ENCODE measurements at regions of chr7 and their contacts with region 1.

Region 1: DNA sequence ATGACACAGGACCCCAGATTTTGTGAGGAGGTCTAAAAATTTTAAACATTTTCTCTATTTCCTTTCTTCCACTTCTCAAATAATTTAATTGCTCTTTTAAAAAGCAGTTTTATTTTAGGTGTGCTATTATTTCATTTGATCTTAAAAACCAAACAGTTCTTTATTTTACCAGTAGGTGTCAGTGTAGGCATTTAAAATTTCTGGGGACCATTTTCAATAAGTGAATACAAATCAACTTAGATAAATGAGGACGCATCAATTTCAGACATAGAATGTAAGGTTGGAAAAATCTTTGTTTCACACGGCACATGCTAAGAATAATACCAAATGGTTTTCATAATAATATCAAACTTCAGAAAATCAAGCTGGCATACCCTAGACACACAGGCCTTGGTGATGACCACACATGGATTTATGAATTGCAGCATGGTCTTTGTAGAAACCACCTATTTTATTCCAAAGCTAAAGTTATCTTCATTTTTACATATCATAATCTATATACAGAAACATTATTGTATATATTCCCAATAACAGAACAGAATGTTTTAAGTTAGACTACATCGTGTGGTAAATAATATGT is 127.6 kb upstream of the SLC26A5 start:
- DNase-seq: no peak
- H3K4me3 Mint-ChIP-seq: no peak overlapping the region
- H3K27ac Mint-ChIP-seq: no peak overlapping the region
- H3K4me1 Mint-ChIP-seq: no peaks in the 10 kb centered on the region
- H3K27me3 Mint-ChIP-seq: peaks cover 8% of the 10 kb centered on the region

Region 2: GRCh38 chr7:104914421-104914820 is 1340.9 kb after region 1 on chr7:
- intact Hi-C with region 1: loop called (anchors 10 kb)
- DNase-seq: no peak
- H3K4me3 Mint-ChIP-seq: no peak overlapping the region
- H3K27ac Mint-ChIP-seq: no peak overlapping the region
- H3K4me1 Mint-ChIP-seq: peaks cover 2% of the 10 kb centered on the region
- H3K27me3 Mint-ChIP-seq: peaks cover 21% of the 10 kb centered on the region